HAP-1 (cell line): ENCODE measurements at regions of chrX and their contacts with region 1.

Region 1: DNA sequence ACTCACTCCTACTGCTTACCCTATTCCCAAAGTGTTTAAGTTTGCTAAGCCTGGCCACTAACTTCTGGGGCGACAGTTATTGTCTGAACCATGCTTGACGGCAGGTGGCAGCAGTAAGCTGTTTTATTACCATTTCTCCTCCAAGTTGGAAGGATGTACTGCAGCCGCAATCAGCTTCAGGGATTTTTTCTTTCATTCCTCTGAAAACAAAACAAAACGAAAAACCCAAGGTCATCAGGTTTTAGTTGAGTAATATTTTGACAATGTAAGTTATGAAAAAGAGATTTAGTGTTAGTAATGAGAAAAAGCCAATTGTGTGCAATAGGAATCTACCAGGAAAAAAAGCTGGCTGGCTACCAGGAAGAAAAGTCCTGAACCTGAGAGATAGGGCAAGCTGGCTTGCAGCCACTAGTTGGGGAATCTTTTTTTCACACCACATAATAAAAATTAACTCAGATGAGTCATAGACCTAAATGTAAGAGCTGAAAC is 13.2 kb upstream of the RAB9B start:
- DNase-seq: peak; percentile 61 to 78
- H3K4me3 ChIP-seq: no peak overlapping the region
- H3K4me1 ChIP-seq: no peaks in the 10 kb centered on the region
- H3K27me3 ChIP-seq: peaks cover 5% of the 10 kb centered on the region

Region 2: DNA sequence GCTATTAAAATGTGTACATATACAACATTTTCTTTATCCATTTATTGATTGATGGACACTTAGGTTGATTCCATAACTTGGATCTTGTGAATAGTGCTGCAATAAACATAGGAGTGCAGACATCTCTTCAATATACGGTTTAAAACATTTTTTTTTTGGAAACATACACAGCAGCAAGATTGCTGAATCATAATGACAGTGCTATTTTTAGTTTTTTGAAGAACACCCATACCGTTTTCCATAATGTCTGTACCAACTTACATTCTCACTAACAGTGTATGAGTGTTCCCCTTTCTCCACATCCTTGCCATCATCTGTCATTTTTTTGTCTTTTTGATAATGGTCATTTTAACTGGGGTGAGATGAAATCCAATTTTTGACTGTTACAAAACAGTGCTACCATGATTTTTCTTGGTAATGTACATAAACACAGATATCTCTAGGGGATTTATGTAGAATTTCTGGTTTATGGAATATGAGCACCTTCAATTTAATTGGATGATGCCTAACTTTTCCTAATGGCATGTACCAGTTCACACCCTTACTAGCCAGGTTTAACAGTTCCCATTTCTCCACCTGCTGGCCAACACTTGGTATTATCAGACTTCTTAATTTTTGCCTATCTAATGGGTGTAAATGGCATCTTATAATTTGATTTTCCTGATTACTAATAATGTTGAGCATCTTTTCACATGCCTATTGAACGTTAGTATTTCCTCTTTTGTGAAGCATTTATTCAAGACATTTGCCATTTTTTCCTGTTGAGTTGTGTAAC is 96.2 kb after region 1 on chrX:
- in situ Hi-C with region 1: loop called (anchors 25 kb)
- DNase-seq: peak; percentile 29 to 52
- H3K4me3 ChIP-seq: no peak overlapping the region
- H3K4me1 ChIP-seq: no peaks in the 10 kb centered on the region
- H3K27me3 ChIP-seq: no peaks in the 10 kb centered on the region

Region 3: DNA sequence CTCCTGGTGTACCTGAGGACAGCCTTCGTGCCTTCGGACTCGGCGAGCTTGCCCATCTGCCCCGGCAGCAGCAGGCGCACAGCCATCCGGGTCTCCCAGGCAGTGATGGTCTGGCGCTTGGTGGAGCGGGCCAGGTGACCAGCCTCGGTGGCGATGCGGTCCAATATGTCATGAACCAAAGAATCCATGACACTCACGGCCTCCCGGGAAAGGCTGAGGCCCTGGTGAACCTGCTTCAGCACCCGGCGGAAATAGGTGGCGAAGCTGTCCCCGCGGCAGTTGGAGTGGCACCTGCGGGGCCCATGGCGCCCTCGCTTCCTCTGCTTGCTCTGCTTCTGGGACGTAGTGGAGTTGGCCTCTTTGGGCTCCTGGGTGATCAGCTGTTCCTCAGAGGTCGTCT is 167.9 kb after region 1 on chrX:
- in situ Hi-C with region 1: no loop called
- DNase-seq: no peak
- H3K4me3 ChIP-seq: no peak overlapping the region
- H3K4me1 ChIP-seq: no peaks in the 10 kb centered on the region
- H3K27me3 ChIP-seq: no peaks in the 10 kb centered on the region

Region 4: GRCh38 chrX:104136241-104137019 is 291.2 kb after region 1 on chrX:
- in situ Hi-C with region 1: loop called (anchors 10 kb)
- DNase-seq: peak; percentile 84 to 87
- H3K4me3 ChIP-seq: peak overlapping the region; percentile 12
- H3K4me1 ChIP-seq: peaks cover 5% of the 10 kb centered on the region; the same call in 1 of the 2 replicates
- H3K27me3 ChIP-seq: no peaks in the 10 kb centered on the region